Panc1 (cell line): ENCODE measurements at regions of chr12 and their contacts with region 1.

Region 1: DNA sequence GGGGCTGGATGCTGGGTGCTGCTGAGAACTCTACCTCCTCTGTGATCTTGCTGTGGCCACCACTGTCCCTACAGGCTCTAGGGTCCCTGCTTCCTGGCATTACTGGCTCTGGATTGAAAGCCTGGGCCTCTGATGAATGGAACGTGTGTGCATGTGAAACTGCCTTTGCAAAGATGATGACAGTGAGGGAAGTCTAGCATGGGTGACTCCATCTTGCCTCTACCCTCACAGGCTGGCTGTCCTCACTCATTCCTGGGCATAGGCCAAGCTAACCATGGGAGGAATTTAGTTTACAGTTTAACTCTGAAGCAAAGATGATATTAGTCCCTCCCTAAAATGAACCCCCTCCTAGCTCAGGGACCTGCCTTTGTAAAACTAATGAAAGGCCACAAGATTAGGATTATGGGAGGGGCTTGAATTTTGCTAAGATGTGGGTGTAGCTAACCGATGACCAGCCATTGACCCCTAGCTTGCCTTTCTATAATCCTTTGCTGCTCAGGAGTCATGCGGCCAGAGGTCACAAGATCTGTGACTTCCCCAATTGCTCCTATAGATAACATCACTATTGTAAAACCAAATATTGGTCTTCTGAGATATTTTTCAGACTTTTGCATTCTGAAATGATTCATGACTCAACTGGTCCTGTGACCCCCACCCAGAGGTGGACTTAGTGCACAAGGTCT is 2.2 kb upstream of the C1S start:
- DNase-seq: no peak
- ATAC-seq: no peak
- H3K4me3 ChIP-seq: no peak overlapping the region
- H3K27ac ChIP-seq: no peak overlapping the region
- H3K4me1 ChIP-seq: no peaks in the 10 kb centered on the region
- H3K27me3 ChIP-seq: peaks cover 3% of the 10 kb centered on the region; the same call in 1 of the 2 replicates
- CTCF ChIP-seq: no peak

Region 2: GRCh38 chr12:6904280-6905278 is 153.7 kb before region 1 on chr12 and contains the start of gene LRRC23:
- CTCF ChIA-PET with region 1: no interaction called
- POLR2A ChIA-PET with region 1: no interaction called
- in situ Hi-C with region 1: no loop called
- intact Hi-C with region 1: no loop called
- DNase-seq: peak; percentile 76
- ATAC-seq: peak; percentile 98
- H3K4me3 ChIP-seq: peak within 1 kb of the TSS; percentile 79 to 89
- H3K27ac ChIP-seq: peak within 1 kb of the TSS; percentile 91
- H3K4me1 ChIP-seq: no peaks in the 10 kb centered on the region; the same call in 1 of the 2 replicates
- H3K27me3 ChIP-seq: no peaks in the 10 kb centered on the region
- CTCF ChIP-seq: no peak
- total RNA-seq, gene LRRC23: 6.5 TPM

Region 3: GRCh38 chr12:7018350-7019042 is 39.8 kb before region 1 on chr12 and contains the start of gene LPCAT3:
- CTCF ChIA-PET with region 1: no interaction called
- POLR2A ChIA-PET with region 1: no interaction called
- in situ Hi-C with region 1: no loop called
- intact Hi-C with region 1: no loop called
- DNase-seq: peak; percentile 71
- ATAC-seq: peak; percentile 96
- H3K4me3 ChIP-seq: peak within 1 kb of the TSS; percentile 80 to 85
- H3K27ac ChIP-seq: peak within 1 kb of the TSS; percentile 86
- H3K4me1 ChIP-seq: peaks cover 27% of the 10 kb centered on the region
- H3K27me3 ChIP-seq: no peaks in the 10 kb centered on the region
- CTCF ChIP-seq: peak; percentile 92
- total RNA-seq, gene LPCAT3: 54.3 TPM

Region 4: GRCh38 chr12:7068240-7068993 is 10.1 kb after region 1 on chr12:
- CTCF ChIA-PET with region 1: interaction called, 10 read pairs
- POLR2A ChIA-PET with region 1: no interaction called
- in situ Hi-C with region 1: no loop called
- intact Hi-C with region 1: no loop called
- DNase-seq: no peak
- ATAC-seq: no peak
- H3K4me3 ChIP-seq: no peak overlapping the region
- H3K27ac ChIP-seq: no peak overlapping the region
- H3K4me1 ChIP-seq: no peaks in the 10 kb centered on the region
- H3K27me3 ChIP-seq: no peaks in the 10 kb centered on the region
- CTCF ChIP-seq: no peak